ENCODE measurements at regions of chr13 and their contacts with region 1.

Region 1: GRCh38 chr13:46553886-46554858 is 1.2 kb downstream of the LRCH1 start:
- DNase-seq: peak; percentile 74 to 79
- ATAC-seq: peak; percentile 64 to 88 (median 71)
- H3K4me3 ChIP-seq: peak overlapping the region; percentile 73 to 100 (median 94)
- H3K27ac ChIP-seq: peak overlapping the region; percentile 90 to 98 (median 92)
- H3K4me1 ChIP-seq: peaks cover 0 to 53% (median 36%) of the 10 kb centered on the region in 9 donors
- H3K27me3 ChIP-seq: no peaks in the 10 kb centered on the region
- CTCF ChIP-seq: peak in 6 of 9 donors; percentile 24 to 42 (median 33)

Region 2: GRCh38 chr13:46468570-46469463 is 85.4 kb before region 1 on chr13:
- intact Hi-C with region 1: no loop called
- DNase-seq: no peak
- ATAC-seq: no peak
- H3K4me3 ChIP-seq: no peak overlapping the region
- H3K27ac ChIP-seq: no peak overlapping the region
- H3K4me1 ChIP-seq: no peaks in the 10 kb centered on the region
- H3K27me3 ChIP-seq: no peaks in the 10 kb centered on the region
- CTCF ChIP-seq: no peak

Region 3: GRCh38 chr13:46504036-46504435 is 50.1 kb before region 1 on chr13:
- intact Hi-C with region 1: loop called in 3 of 10 experiments (anchors 5 to 10 kb)
- DNase-seq: no peak
- ATAC-seq: no peak
- H3K4me3 ChIP-seq: no peak overlapping the region
- H3K27ac ChIP-seq: no peak overlapping the region
- H3K4me1 ChIP-seq: peaks cover 0 to 3% (median 0%) of the 10 kb centered on the region in 9 donors
- H3K27me3 ChIP-seq: peaks cover 0 to 5% (median 0%) of the 10 kb centered on the region in 7 donors
- CTCF ChIP-seq: no peak

Region 4: GRCh38 chr13:46603165-46603603 is 49.0 kb after region 1 on chr13:
- intact Hi-C with region 1: loop called in 6 of 10 experiments (anchors 5 to 10 kb)
- DNase-seq: no peak
- ATAC-seq: peak in 6 of 8 donors; percentile 15 to 53 (median 40)
- H3K4me3 ChIP-seq: no peak overlapping the region
- H3K27ac ChIP-seq: peak overlapping the region in 7 of 10 donors; percentile 7 to 71 (median 53)
- H3K4me1 ChIP-seq: peaks cover 9 to 96% (median 85%) of the 10 kb centered on the region in 9 donors
- H3K27me3 ChIP-seq: no peaks in the 10 kb centered on the region
- CTCF ChIP-seq: peak; percentile 5 to 54 (median 32)

Region 5: DNA sequence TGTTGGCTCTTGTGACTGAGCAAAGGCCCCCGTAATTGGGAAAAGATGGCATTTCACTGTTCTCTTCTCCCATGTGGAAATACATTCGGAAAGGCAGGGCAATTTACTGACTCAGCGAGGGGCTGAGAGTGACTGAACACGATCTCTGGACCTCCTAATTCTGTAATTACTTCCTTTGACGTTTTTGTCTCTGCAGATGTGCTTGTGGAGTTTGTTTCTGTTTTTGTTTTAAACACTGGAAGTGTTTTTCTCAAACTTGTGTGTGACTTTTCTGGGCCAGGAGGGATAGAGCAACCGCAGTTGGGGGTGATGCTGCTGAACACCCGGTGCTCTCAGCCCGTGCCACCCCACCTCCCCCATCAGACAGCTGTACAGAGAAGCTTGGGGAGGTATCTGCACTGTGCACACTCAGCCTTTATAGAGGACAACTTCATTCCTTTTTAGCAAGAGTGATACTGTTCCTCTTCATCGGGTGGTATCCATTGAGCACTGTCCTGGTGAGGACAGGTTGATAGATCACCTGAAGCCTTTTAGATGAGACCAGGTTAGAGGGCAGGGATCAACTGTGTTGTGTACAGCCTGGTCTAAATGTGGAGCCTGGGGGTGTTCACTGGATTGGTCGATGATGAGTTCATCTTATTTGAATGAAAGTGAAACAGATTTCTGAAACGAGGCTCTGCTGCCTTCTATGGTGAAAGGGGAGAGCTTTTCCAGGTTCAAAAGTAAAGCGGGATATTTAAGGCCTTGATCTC is 125.4 kb after region 1 on chr13:
- intact Hi-C with region 1: loop called in 3 of 10 experiments (anchors 5 to 10 kb)
- DNase-seq: peak in 1 of 2 donors; percentile 60
- ATAC-seq: peak; percentile 71 to 89 (median 84)
- H3K4me3 ChIP-seq: peak overlapping the region in 7 of 10 donors; percentile 16 to 46 (median 43)
- H3K27ac ChIP-seq: peak overlapping the region in 9 of 10 donors; percentile 0 to 80 (median 70)
- H3K4me1 ChIP-seq: peaks cover 0 to 76% (median 57%) of the 10 kb centered on the region in 9 donors
- H3K27me3 ChIP-seq: no peaks in the 10 kb centered on the region
- CTCF ChIP-seq: peak in 5 of 9 donors; percentile 20 to 55 (median 29)

Region 6: GRCh38 chr13:46721054-46721453 is 166.9 kb after region 1 on chr13:
- intact Hi-C with region 1: loop called (anchors 1 to 5 kb)
- DNase-seq: peak in 1 of 2 donors; percentile 53
- ATAC-seq: peak in 4 of 8 donors; percentile 63 to 76 (median 64)
- H3K4me3 ChIP-seq: no peak overlapping the region
- H3K27ac ChIP-seq: no peak overlapping the region
- H3K4me1 ChIP-seq: peaks cover 0 to 10% (median 0%) of the 10 kb centered on the region in 9 donors
- H3K27me3 ChIP-seq: no peaks in the 10 kb centered on the region
- CTCF ChIP-seq: peak; percentile 46 to 87 (median 69)